CD8-positive, alpha-beta memory T cell (primary cell): ENCODE measurements at regions of chr2 and their contacts with region 1.

Region 1: GRCh38 chr2:43219383-43220228 is 6.8 kb downstream of the ZFP36L2 start:
- DNase-seq: peak; percentile 64 to 94 (median 90)
- H3K4me3 ChIP-seq: peak overlapping the region; percentile 99
- H3K4me3 Mint-ChIP-seq: peak overlapping the region; percentile 80 to 99 (median 98)
- H3K27ac ChIP-seq: peak overlapping the region; percentile 97
- H3K27ac Mint-ChIP-seq: peak overlapping the region; percentile 91 to 99 (median 98)
- H3K4me1 ChIP-seq: peaks cover 40% of the 10 kb centered on the region
- H3K4me1 Mint-ChIP-seq: peaks cover 48 to 56% (median 55%) of the 10 kb centered on the region in 3 donors
- H3K27me3 ChIP-seq: no peaks in the 10 kb centered on the region
- H3K27me3 Mint-ChIP-seq: peaks cover 0 to 26% of the 10 kb centered on the region in 2 donors

Region 2: GRCh38 chr2:43139996-43140621 is 79.5 kb before region 1 on chr2:
- CTCF ChIA-PET with region 1: interaction called, 820 read pairs
- POLR2A ChIA-PET with region 1: interaction called, 590 read pairs
- DNase-seq: peak in 3 of 5 donors; percentile 64 to 74 (median 71)
- H3K4me3 ChIP-seq: peak overlapping the region; percentile 19
- H3K4me3 Mint-ChIP-seq: peak overlapping the region; percentile 46 to 89 (median 69)
- H3K27ac ChIP-seq: peak overlapping the region; percentile 58
- H3K27ac Mint-ChIP-seq: peak overlapping the region; percentile 89 to 99 (median 98)
- H3K4me1 ChIP-seq: peaks cover 93% of the 10 kb centered on the region
- H3K4me1 Mint-ChIP-seq: peaks cover 61 to 80% (median 79%) of the 10 kb centered on the region in 3 donors
- H3K27me3 ChIP-seq: no peaks in the 10 kb centered on the region
- H3K27me3 Mint-ChIP-seq: peaks cover 0 to 4% of the 10 kb centered on the region in 2 donors

Region 3: GRCh38 chr2:43199492-43200481 is 19.8 kb before region 1 on chr2:
- CTCF ChIA-PET with region 1: interaction called, 33 read pairs
- POLR2A ChIA-PET with region 1: interaction called, 17 read pairs
- DNase-seq: no peak
- H3K4me3 ChIP-seq: no peak overlapping the region
- H3K4me3 Mint-ChIP-seq: no peak overlapping the region
- H3K27ac ChIP-seq: no peak overlapping the region
- H3K27ac Mint-ChIP-seq: no peak overlapping the region
- H3K4me1 ChIP-seq: peaks cover 50% of the 10 kb centered on the region
- H3K4me1 Mint-ChIP-seq: peaks cover 33 to 57% (median 36%) of the 10 kb centered on the region in 3 donors
- H3K27me3 ChIP-seq: no peaks in the 10 kb centered on the region
- H3K27me3 Mint-ChIP-seq: no peaks in the 10 kb centered on the region

Region 4: DNA sequence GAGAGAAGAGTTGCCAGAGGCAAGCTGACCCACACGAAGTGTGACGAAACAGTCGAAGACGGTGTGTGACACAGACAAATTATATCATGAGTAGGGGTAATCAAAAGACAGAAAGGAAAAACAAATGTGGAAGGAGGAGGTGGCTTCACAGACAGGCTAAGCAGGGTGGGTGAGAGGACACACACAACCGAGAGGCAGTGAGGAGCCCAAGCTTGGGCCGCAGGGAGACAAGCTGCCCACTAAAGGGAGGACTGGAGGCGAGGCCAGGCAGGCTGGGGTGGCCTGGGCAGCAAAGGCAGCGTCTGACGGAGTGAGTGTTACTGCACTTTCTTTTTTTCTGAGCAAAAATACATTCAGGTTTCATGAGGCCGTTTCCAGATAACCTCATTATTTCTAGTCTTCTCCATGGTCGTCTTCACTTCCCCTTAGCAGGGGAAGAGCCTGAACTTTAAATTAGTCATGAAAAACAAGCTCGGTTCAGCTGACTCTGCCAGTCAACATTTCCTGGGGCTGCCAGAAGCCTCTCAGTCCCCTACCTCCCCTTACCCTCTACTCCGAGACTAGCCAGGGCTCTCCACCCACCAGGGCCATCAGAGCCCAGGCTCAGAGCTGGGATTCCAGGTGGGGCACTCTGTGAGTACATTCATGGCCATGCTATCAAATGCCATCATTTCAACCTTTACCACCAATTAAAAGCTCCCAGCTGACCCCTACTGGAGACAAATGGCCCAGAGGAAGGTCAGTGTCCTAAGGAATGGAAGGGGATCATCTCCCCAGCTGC is 20.6 kb after region 1 on chr2:
- CTCF ChIA-PET with region 1: no interaction called
- POLR2A ChIA-PET with region 1: no interaction called
- DNase-seq: no peak
- H3K4me3 ChIP-seq: no peak overlapping the region
- H3K4me3 Mint-ChIP-seq: no peak overlapping the region
- H3K27ac ChIP-seq: no peak overlapping the region
- H3K27ac Mint-ChIP-seq: peak overlapping the region in 4 of 8 donors; percentile 0 to 77 (median 6)
- H3K4me1 ChIP-seq: no peaks in the 10 kb centered on the region
- H3K4me1 Mint-ChIP-seq: peaks cover 13 to 22% (median 13%) of the 10 kb centered on the region in 3 donors
- H3K27me3 ChIP-seq: no peaks in the 10 kb centered on the region
- H3K27me3 Mint-ChIP-seq: no peaks in the 10 kb centered on the region

Region 5: GRCh38 chr2:43438858-43439655 is 219.5 kb after region 1 on chr2:
- CTCF ChIA-PET with region 1: no interaction called
- POLR2A ChIA-PET with region 1: no interaction called
- DNase-seq: no peak
- H3K4me3 ChIP-seq: no peak overlapping the region
- H3K4me3 Mint-ChIP-seq: peak overlapping the region in 1 of 7 donors; percentile 44
- H3K27ac ChIP-seq: no peak overlapping the region
- H3K27ac Mint-ChIP-seq: no peak overlapping the region
- H3K4me1 ChIP-seq: no peaks in the 10 kb centered on the region
- H3K4me1 Mint-ChIP-seq: peaks cover 0 to 14% (median 9%) of the 10 kb centered on the region in 3 donors
- H3K27me3 ChIP-seq: no peaks in the 10 kb centered on the region
- H3K27me3 Mint-ChIP-seq: no peaks in the 10 kb centered on the region